Calu3 (cell line): ENCODE measurements at regions of chr4 and their contacts with region 1.

Region 1: DNA sequence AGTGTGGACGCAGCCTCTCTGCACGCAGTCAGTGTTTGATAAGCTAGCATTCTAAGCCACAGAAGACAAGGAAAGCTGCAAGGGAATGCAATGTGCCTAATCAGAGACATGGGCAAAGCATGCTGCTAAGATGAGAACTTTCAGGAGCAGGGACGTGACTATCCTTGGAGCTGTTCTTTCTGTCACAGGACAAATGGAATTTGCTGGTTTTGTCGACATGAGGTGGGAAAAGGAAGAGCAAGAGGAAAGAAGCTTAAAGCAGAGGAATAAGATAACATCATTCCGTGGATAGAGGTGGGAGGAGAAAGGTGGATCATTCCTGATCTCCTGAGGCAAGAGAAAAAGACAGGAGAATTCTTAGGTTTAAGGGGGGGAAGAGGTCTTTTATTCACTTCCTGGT is 33.7 kb downstream of the RBM47 start:
- DNase-seq: no peak
- H3K4me3 Mint-ChIP-seq: no peak overlapping the region
- H3K27ac Mint-ChIP-seq: no peak overlapping the region
- H3K4me1 Mint-ChIP-seq: peaks cover 9% of the 10 kb centered on the region
- H3K27me3 Mint-ChIP-seq: no peaks in the 10 kb centered on the region
- CTCF ChIP-seq: no peak

Region 2: DNA sequence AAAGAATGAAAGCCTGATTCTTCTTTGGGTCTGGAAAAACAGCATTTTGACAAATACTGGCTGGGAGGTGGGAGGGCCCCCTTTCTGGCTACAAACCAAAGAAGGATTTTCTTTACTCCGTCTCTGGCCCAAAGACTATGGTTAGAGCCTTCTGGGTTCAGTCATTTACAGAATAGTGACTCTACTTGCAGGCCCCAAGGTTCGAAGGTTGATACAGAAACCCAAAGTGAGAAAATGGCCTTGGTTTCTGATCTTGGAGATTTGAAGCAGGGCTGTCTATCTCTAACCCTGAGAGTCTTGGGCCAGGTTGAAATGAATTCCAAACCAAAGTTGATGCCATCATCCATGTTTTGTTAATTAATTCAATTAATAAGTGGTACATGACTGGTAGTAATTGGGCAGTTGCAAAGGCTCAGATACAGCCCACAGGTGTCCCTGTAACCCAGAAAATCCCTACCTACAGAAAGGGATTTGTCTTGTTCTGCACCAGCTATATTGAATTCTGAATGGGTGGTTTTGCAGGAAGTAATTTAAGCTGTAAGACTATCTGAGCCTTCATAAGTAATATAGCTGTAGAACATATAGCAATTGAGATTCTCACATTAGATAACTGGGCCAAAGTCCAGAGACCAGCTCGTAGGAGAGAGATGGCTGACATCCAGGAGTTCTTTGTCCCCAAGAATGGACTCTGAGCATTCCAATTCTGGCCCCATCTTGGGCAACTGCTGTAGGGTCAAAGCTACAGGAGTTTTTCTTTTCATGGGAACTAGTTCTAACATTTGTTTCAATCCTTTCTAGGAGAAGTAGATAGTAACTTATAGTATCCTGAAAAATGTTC is 226.3 kb before region 1 on chr4:
- CTCF ChIA-PET with region 1: interaction called, 10 read pairs
- intact Hi-C with region 1: no loop called
- DNase-seq: no peak
- H3K4me3 Mint-ChIP-seq: no peak overlapping the region
- H3K27ac Mint-ChIP-seq: no peak overlapping the region
- H3K4me1 Mint-ChIP-seq: peaks cover 16% of the 10 kb centered on the region
- H3K27me3 Mint-ChIP-seq: no peaks in the 10 kb centered on the region
- CTCF ChIP-seq: no peak

Region 3: GRCh38 chr4:40395908-40396793 is 199.8 kb before region 1 on chr4:
- CTCF ChIA-PET with region 1: no interaction called
- intact Hi-C with region 1: no loop called
- DNase-seq: peak; percentile 60
- H3K4me3 Mint-ChIP-seq: no peak overlapping the region
- H3K27ac Mint-ChIP-seq: no peak overlapping the region
- H3K4me1 Mint-ChIP-seq: peaks cover 10% of the 10 kb centered on the region
- H3K27me3 Mint-ChIP-seq: no peaks in the 10 kb centered on the region
- CTCF ChIP-seq: no peak

Region 4: DNA sequence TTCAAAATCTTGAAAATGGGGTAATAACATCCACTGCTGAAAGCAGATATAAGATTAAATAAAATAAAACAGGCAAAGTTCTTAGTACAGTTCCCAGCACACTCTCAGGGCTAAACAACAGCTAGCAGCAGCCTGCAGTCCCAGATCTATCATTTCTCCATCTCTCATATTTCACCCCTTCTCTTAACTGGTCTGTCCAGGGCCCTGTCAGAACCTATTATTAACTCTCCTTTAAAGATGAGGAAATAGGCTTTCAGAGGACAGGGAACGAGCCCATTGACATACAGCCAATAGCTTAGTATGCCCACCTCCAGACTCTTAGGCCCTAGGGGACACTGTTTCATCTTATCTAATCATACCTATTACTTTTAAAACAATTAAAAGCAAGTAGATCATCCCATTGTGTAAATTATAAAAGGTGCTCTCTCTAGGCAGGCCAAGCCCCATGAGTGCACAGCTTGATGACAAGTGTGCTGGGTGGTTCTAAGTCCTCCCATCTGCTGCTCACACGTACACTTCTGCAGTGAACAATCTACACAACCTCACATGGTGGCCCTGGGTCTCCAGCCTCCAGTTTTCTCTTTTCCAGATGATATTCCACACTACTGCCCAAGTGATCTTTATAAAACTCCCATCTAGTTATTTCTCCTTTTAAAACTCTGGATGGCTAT is 499.4 kb after region 1 on chr4:
- CTCF ChIA-PET with region 1: no interaction called
- intact Hi-C with region 1: no loop called
- DNase-seq: no peak
- H3K4me3 Mint-ChIP-seq: no peak overlapping the region
- H3K27ac Mint-ChIP-seq: no peak overlapping the region
- H3K4me1 Mint-ChIP-seq: no peaks in the 10 kb centered on the region
- H3K27me3 Mint-ChIP-seq: no peaks in the 10 kb centered on the region
- CTCF ChIP-seq: no peak